Left lung (tissue), 14 donors: ENCODE measurements at regions of chr17 and their contacts with region 1.

Region 1: GRCh38 chr17:67931233-67931632 is 65.0 kb downstream of the C17orf58 start:
- DNase-seq: no peak
- ATAC-seq: no peak
- H3K4me3 ChIP-seq: no peak overlapping the region
- H3K27ac ChIP-seq: no peak overlapping the region
- H3K4me1 ChIP-seq: no peaks in the 10 kb centered on the region
- H3K27me3 ChIP-seq: no peaks in the 10 kb centered on the region
- CTCF ChIP-seq: no peak

Region 2: DNA sequence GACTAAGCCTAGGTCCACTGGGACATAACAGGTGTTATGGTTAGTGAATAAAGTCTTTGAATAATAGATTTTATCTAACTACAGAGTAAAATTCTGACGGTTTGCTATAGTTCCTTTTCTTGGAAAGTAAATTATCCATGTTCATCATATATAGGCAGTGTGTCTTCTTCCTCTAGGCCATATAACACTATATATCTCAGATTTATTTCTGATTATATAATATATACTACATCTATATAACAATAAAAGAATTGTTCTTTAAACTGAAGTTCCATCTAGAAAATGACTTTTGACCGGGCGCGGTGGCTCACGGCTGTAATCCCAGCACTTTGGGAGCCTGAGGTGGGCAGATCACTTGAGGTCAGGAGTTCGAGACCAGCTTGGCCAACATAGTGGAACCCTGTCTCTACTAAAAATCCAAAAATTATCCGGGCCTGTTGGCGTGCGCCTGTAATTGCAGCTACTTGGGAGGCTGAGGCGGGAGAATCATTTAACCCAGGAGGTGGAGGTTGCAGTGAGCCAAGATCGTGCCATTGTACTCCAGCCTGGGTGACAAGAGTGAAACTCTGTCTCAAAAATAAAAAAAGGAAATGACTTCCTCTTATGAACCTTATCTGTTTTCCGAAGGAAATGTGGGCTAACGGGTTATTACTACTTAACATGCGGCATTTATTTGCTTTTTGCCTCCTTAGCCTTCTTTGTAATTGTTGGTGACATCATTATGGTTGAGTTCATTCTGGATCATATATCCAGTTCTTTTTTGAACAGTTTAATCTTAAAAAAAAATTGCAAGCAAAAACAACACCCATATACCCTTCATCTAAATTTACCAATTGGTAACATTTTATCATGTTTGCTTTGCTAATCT is 184.3 kb before region 1 on chr17:
- intact Hi-C with region 1: loop called in 1 of 2 experiments (anchors 10 kb)
- DNase-seq: peak in 1 of 4 donors; percentile 40
- ATAC-seq: peak; percentile 46
- H3K4me3 ChIP-seq: no peak overlapping the region
- H3K27ac ChIP-seq: no peak overlapping the region
- H3K4me1 ChIP-seq: no peaks in the 10 kb centered on the region
- H3K27me3 ChIP-seq: no peaks in the 10 kb centered on the region
- CTCF ChIP-seq: no peak

Region 3: DNA sequence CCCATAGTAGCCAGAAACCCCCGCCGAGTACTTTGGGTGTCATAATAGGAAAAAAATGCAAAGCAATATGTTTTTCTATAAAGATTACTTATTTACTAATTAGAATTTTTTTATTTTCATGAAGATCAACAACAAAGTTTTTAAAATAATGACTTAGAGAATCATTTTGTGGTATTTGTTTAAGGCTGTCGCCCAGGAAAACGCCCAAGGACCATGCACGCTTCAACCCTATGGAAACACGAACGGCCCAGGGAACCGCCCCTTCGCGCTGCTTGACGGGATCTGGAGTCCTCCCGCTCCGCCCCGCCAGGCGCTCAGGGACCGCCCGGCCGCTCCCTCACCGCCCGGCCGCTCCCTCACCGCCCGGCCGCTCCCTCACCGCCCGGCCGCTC is 103.9 kb after region 1 on chr17:
- intact Hi-C with region 1: no loop called
- DNase-seq: peak in 2 of 4 donors; percentile 96 to 98
- ATAC-seq: peak; percentile 92
- H3K4me3 ChIP-seq: peak overlapping the region; percentile 12 to 100
- H3K27ac ChIP-seq: no peak overlapping the region
- H3K4me1 ChIP-seq: peaks cover 3 to 13% of the 10 kb centered on the region in 2 donors
- H3K27me3 ChIP-seq: no peaks in the 10 kb centered on the region
- CTCF ChIP-seq: peak in 1 of 2 donors; percentile 49